GM10248 (cell line): ENCODE measurements at regions of chr3 and their contacts with region 1.

Region 1: GRCh38 chr3:30034246-30034991 is 572.0 kb upstream of the TGFBR2 start:
- DNase-seq: no peak
- CTCF ChIP-seq: no peak

Region 2: GRCh38 chr3:30012941-30013543 is 21.4 kb before region 1 on chr3:
- CTCF ChIA-PET with region 1: interaction called, 17 read pairs
- POLR2A ChIA-PET with region 1: no interaction called
- DNase-seq: peak; percentile 18
- CTCF ChIP-seq: peak; percentile 60